ENCODE measurements at regions of chr19 and their contacts with region 1.

Region 1: GRCh38 chr19:10565567-10566407 is at the start of gene KRI1:
- DNase-seq: peak; percentile 88
- ATAC-seq: peak; percentile 69
- H3K4me3 ChIP-seq: peak within 1 kb of the TSS; percentile 80
- H3K27ac ChIP-seq: peak within 1 kb of the TSS; percentile 88
- H3K4me1 ChIP-seq: peaks cover 23% of the 10 kb centered on the region
- H3K27me3 ChIP-seq: no peaks in the 10 kb centered on the region
- CTCF ChIP-seq: peak in 2 of 3 experiments; percentile 5 to 24; a peak in 1 of 6 replicates
- EP300 ChIP-seq: peak in 1 of 2 experiments; percentile 10; a peak in 1 of 4 replicates
- POLR2A ChIP-seq: peak; percentile 93
- RAD21 ChIP-seq: no peak
- polyA plus RNA-seq, gene KRI1: 0.98 to 3.4 TPM

Region 2: DNA sequence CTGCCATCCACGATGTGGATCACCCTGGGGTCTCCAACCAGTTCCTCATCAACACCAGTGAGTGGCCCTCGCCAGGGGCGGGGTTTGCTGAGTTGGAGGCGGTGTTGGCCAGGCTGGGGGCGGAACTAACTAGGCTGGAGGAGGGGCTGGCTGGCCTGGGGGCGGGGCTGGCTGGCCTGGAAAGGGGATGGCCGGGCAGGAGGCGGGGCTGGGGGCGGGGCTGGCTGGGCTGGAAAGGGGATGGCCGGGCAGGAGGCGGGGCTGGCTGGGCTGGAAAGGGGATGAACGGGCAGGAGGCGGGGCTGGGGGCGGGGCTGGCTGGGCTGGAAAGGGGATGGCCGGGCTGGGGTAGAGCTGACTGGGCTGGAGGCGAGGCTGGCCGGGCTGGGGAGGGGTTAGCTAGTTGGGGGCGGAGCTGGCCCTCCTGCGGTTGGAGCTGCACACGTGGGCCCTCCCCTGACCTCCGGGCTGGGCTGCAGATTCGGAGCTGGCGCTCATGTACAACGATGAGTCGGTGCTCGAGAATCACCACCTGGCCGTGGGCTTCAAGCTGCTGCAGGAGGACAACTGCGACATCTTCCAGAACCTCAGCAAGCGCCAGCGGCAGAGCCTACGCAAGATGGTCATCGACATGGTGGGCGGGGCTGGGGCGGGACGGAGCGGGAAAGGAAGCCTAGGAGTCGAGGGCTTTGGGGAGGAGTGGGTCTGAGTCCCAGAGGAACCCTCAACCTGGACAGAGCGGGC is 104.6 kb before region 1 on chr19:
- CTCF ChIA-PET with region 1: no interaction called
- POLR2A ChIA-PET with region 1: interaction called, 11 read pairs
- RAD21 ChIA-PET with region 1: no interaction called
- SMC1A ChIA-PET with region 1: no interaction called
- in situ Hi-C with region 1: no loop called
- intact Hi-C with region 1: no loop called
- DNase-seq: peak; percentile 60
- ATAC-seq: peak; percentile 100
- H3K4me3 ChIP-seq: peak overlapping the region; percentile 70; the same call in 1 of the 2 replicates
- H3K27ac ChIP-seq: no peak overlapping the region
- H3K4me1 ChIP-seq: peaks cover 4% of the 10 kb centered on the region; the same call in 1 of the 2 replicates
- H3K27me3 ChIP-seq: no peaks in the 10 kb centered on the region
- CTCF ChIP-seq: no peak
- EP300 ChIP-seq: no peak
- POLR2A ChIP-seq: no peak
- RAD21 ChIP-seq: no peak

Region 3: DNA sequence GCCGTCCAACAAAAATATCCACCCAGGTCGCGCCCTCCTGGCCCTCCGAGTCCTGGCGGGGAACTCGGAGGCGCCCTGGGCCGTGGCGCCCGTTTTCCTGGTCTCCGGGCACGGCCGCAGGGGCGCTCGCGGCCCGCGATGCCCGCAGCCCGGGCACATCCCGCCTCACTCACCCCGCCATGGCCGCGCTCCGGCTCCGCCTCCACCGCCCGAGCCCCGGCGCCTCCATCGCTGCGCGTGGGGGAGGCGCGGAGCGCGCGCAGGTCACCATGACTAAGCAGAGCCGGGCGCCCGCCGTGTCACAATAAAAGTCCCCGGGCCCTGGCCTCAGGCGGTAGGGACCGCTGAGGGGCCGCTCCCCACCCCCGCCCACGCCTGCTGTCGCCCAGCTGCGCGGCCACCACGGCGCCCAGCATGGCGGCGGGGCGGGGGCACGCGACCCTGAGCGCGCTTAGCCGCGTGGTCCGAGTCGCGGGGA is 63.2 kb before region 1 on chr19:
- CTCF ChIA-PET with region 1: interaction called, 8 read pairs
- POLR2A ChIA-PET with region 1: interaction called, 5 read pairs
- RAD21 ChIA-PET with region 1: interaction called, 3 read pairs
- SMC1A ChIA-PET with region 1: no interaction called
- in situ Hi-C with region 1: no loop called
- intact Hi-C with region 1: loop called (anchors 2 kb)
- DNase-seq: peak; percentile 61
- ATAC-seq: peak; percentile 90
- H3K4me3 ChIP-seq: peak overlapping the region; percentile 77
- H3K27ac ChIP-seq: peak overlapping the region; percentile 99
- H3K4me1 ChIP-seq: peaks cover 25% of the 10 kb centered on the region
- H3K27me3 ChIP-seq: no peaks in the 10 kb centered on the region
- CTCF ChIP-seq: no peak
- EP300 ChIP-seq: peak in 1 of 2 experiments; percentile 39; a peak in 1 of 4 replicates
- POLR2A ChIP-seq: peak; percentile 95
- RAD21 ChIP-seq: no peak

Region 4: DNA sequence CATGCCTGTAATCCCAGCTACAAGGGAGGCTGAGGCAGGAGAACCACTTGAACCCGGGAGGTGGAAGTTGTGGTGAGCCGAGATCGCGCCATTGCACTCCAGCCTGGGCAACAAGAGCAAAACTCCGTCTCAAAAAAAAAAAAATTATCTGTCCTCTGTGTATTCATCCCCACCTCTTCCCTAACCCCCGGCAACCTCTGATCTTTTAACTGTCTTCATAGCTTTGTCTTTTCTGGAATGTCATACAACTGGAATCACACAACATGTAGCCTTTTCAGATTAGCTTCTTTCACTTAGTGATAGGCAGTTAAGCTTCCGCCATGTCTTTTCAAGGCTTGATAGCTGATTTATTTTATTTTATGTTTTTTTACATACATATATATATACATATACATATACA is 40.2 kb before region 1 on chr19:
- CTCF ChIA-PET with region 1: no interaction called
- POLR2A ChIA-PET with region 1: no interaction called
- RAD21 ChIA-PET with region 1: no interaction called
- SMC1A ChIA-PET with region 1: no interaction called
- in situ Hi-C with region 1: no loop called
- intact Hi-C with region 1: no loop called
- DNase-seq: no peak
- ATAC-seq: no peak
- H3K4me3 ChIP-seq: no peak overlapping the region
- H3K27ac ChIP-seq: no peak overlapping the region
- H3K4me1 ChIP-seq: no peaks in the 10 kb centered on the region
- H3K27me3 ChIP-seq: no peaks in the 10 kb centered on the region
- CTCF ChIP-seq: no peak
- EP300 ChIP-seq: no peak
- POLR2A ChIP-seq: no peak
- RAD21 ChIP-seq: no peak

Region 5: DNA sequence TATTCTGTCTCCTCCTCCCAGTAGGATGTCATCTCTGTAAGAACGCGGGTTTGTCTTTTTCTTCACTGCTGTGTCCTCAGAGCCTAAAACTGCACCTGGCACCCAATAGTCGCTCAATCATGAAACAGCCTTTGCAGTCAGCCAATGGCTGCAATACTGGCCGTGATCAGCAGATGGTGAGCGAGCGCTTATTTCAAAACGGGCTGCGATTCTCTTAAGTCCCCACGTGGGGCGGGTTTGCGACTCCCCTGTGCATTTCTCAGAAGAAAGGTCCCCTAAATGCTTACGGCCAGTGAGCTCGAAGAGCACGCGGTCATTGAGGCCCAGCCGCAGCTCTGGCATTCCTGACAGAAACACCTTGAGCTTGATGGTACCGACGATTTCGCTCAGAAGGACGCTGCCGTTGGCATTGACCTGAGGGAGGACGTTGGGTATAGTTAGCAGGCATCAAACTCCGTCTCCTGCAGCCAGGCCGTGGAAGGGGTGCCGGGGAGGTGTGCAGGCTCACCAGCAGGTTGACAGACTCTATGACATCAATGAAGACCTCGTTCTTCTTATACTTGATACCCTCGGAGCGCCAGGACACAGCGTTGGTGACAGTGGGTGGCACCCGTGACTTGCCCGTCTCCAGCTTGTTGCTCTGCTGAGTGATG is 15.3 kb after region 1 on chr19:
- CTCF ChIA-PET with region 1: interaction called, 19 read pairs
- POLR2A ChIA-PET with region 1: interaction called, 3 read pairs
- RAD21 ChIA-PET with region 1: no interaction called
- SMC1A ChIA-PET with region 1: no interaction called
- in situ Hi-C with region 1: no loop called
- intact Hi-C with region 1: no loop called
- DNase-seq: no peak
- ATAC-seq: peak; percentile 96
- H3K4me3 ChIP-seq: no peak overlapping the region
- H3K27ac ChIP-seq: no peak overlapping the region
- H3K4me1 ChIP-seq: peaks cover 2% of the 10 kb centered on the region; the same call in 1 of the 2 replicates
- H3K27me3 ChIP-seq: no peaks in the 10 kb centered on the region; a peak in 1 of 4 replicates
- CTCF ChIP-seq: peak; percentile 99 to 100 (median 100); a peak in 5 of 6 replicates
- EP300 ChIP-seq: no peak
- POLR2A ChIP-seq: no peak
- RAD21 ChIP-seq: peak; percentile 99